ENCODE measurements at regions of chr12 and their contacts with region 1.

Region 1: GRCh38 chr12:56029666-56030293 is 8.9 kb downstream of the IKZF4 start:
- DNase-seq: no peak
- H3K4me3 ChIP-seq: no peak overlapping the region
- H3K27ac ChIP-seq: no peak overlapping the region
- H3K4me1 ChIP-seq: peaks cover 13% of the 10 kb centered on the region
- H3K27me3 ChIP-seq: no peaks in the 10 kb centered on the region
- CTCF ChIP-seq: peak; percentile 76 to 87

Region 2: GRCh38 chr12:55757701-55758100 is 272.1 kb before region 1 on chr12:
- CTCF ChIA-PET with region 1: no interaction called
- dilution Hi-C with region 1: no loop called
- in situ Hi-C with region 1: loop called in 1 of 2 experiments (anchors 10 kb)
- intact Hi-C with region 1: no loop called
- DNase-seq: no peak
- H3K4me3 ChIP-seq: no peak overlapping the region
- H3K27ac ChIP-seq: no peak overlapping the region
- H3K4me1 ChIP-seq: no peaks in the 10 kb centered on the region
- H3K27me3 ChIP-seq: no peaks in the 10 kb centered on the region
- CTCF ChIP-seq: no peak

Region 3: DNA sequence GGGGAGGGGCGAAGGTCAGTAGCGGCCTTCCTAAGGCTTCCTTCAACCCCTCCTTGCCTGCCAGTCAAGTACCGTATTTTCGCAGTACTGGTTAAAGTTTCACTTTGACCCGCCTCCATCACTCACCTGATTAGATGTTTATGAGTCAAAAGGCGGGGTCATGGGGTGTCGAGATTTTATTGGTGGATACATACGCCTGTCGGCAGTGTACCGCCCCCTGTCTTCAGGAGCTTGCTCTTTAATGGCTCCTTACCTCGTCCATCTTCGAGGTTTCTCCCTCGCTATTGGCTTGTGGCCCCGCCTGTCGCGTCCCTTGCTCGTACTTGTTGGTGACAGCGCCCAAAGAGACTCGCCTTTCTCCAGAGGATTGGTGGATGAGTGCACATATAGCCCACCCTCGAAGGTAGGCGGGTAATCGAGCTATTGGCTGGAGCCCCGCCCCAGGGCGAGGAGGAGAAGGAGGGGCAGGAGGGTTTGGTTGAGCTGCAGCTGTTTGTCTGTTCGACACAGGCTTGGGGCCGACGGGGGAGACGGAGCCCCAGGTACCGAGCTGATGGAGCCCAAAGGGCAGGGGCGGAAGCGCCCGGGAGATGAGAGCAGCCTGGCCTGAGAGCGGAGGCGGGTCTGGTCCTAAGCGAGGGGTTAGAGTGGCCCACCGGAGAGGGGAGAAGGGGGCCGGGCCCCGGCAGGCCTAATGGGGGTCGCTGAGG is 56.0 kb before region 1 on chr12 and contains the start of gene RAB5B:
- CTCF ChIA-PET with region 1: interaction called, 13 read pairs
- dilution Hi-C with region 1: no loop called
- in situ Hi-C with region 1: no loop called
- intact Hi-C with region 1: no loop called
- DNase-seq: peak; percentile 100
- H3K4me3 ChIP-seq: peak within 1 kb of the TSS; percentile 94 to 98 (median 96)
- H3K27ac ChIP-seq: peak within 1 kb of the TSS; percentile 95
- H3K4me1 ChIP-seq: peaks cover 17% of the 10 kb centered on the region
- H3K27me3 ChIP-seq: no peaks in the 10 kb centered on the region
- CTCF ChIP-seq: no peak
- total RNA-seq, gene RAB5B: 79.4 to 92.5 TPM

Region 4: GRCh38 chr12:55982319-55982936 is 47.4 kb before region 1 on chr12:
- CTCF ChIA-PET with region 1: no interaction called
- dilution Hi-C with region 1: no loop called
- in situ Hi-C with region 1: loop called in 1 of 2 experiments (anchors 10 kb)
- intact Hi-C with region 1: no loop called
- DNase-seq: no peak
- H3K4me3 ChIP-seq: no peak overlapping the region
- H3K27ac ChIP-seq: no peak overlapping the region
- H3K4me1 ChIP-seq: peaks cover 7% of the 10 kb centered on the region
- H3K27me3 ChIP-seq: no peaks in the 10 kb centered on the region
- CTCF ChIP-seq: no peak

Region 5: DNA sequence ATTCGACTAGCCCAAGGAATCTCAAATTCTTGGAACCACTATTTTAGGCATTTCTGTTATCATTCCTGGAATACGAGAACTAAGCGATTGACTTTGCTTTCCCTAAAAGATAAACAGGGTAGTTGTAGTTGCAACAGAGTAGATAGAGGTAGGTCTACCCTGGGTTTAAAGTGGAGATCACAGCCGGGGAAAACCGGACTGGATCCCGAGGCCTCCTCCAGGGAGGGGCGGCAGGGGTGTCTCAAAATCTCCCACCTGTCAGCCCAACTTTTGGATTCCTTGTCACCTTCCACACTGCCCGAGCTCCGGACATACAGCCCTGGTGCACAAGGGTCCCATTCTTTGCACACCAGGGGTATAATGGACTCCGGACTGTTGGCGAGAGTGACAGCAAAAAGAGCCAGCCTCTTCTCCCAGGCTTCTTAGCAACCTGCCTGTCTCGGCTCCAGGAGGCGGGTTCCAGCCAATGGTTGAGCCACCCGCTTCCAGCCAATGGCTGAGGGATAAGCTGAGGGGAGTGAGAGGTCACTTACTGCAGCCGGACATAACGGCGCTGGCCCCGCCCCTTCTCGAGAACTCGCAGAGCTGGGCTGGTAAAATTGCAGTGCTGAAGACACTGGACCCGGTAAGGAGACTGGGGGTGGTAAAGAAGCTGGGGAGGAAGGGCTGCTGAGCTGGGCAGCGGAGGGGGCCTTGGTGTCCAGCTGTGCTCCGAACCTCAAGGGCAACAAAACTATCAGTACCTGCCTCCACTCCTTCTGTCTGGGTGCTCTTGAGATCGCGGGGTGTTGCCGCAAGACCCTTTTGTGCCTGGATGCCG is 32.9 kb before region 1 on chr12 and contains the start of gene SUOX:
- CTCF ChIA-PET with region 1: interaction called, 10 read pairs
- dilution Hi-C with region 1: no loop called
- in situ Hi-C with region 1: no loop called
- intact Hi-C with region 1: loop called (anchors 1 kb)
- DNase-seq: peak; percentile 96
- H3K4me3 ChIP-seq: peak within 1 kb of the TSS; percentile 67 to 82 (median 75)
- H3K27ac ChIP-seq: peak within 1 kb of the TSS; percentile 63
- H3K4me1 ChIP-seq: peaks cover 11% of the 10 kb centered on the region
- H3K27me3 ChIP-seq: no peaks in the 10 kb centered on the region
- CTCF ChIP-seq: no peak
- total RNA-seq, gene SUOX: 10.7 to 14.7 TPM

Region 6: DNA sequence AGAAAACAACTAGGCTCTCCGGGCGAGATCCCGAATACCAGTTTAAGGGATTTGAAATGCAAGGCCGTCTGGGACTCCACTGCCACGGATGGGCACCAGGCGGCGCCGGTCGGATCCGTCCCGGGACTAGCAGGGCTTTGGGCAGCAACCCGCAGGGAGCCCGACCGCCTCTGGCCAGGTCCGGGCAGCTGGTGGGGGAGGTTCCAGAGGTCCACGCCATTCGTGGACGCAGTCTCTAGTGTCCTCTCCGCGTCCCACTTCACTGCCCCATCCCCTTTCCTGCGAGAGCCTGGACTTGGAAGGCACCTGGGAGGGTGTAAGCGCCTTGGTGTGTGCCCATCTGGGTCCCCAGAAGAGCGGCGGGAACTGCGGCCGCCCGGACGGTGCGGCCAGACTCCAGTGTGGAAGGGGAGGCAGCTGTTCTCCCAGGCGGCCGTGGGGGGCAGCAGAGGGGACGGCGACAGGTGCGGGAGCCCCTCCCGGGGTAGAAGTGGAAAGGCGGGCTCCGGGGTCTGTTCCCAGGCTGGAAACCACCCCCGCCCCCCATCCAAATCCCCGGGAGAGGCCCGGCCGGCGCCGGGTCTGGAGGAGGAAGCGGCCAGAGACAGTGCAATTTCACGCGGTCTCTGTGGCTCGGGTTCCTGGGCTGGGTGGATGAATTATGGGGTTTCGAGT is 49.3 kb after region 1 on chr12:
- CTCF ChIA-PET with region 1: no interaction called
- dilution Hi-C with region 1: no loop called
- in situ Hi-C with region 1: no loop called
- intact Hi-C with region 1: no loop called
- DNase-seq: peak; percentile 81
- H3K4me3 ChIP-seq: peak overlapping the region; percentile 55 to 82 (median 73)
- H3K27ac ChIP-seq: peak overlapping the region; percentile 65
- H3K4me1 ChIP-seq: peaks cover 16% of the 10 kb centered on the region
- H3K27me3 ChIP-seq: no peaks in the 10 kb centered on the region
- CTCF ChIP-seq: peak; percentile 77 to 92